Activated T-helper 2 cell treated with anti-CD3 and anti-CD28 coated beads, Interferon-gamma antibody, Interleukin-2, Interleukin-4, amounts not matched to agents 10 μg/mL and 5 μg/mL and 100 μg/mL, durations not matched to agents 14 hours and 24 hours and 36 hours (primary cell): ENCODE measurements at regions of chr12 and their contacts with region 1.

Region 1: DNA sequence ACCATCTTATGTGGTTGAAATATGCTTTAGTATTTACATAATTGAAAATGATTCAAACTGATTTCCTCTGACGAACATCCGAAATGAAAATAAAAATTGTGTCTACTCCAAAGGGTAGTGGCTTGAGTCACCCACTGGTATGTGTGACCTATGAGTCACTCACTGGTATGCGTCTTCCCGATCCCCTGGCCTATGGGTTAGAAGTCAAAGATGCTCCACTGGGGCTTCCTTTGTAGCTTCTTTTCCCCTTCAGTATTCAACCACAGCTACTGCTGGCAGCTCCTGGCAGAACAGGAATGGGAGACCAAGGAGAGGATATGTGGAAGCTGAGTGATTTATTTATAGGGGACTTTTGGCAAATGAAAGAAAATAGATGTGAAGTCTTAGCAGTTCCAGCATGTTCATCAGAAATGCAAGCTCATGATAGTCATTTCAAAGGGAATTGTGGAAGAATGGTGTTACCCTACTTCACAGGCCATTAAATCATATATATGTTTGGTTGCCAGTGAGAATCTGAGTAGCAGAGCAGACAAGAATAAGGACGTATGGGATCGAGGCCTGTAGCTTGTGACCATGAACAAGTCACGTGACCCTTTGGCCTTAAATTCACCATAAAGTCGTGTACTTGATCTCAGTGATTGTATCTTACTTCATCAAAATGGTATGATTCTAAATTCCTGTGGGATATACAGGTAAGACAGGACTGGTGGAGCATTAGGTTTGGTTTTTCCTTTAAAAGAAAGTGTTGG is 108.3 kb downstream of the CRADD start:
- DNase-seq: peak; percentile 37
- H3K4me3 Mint-ChIP-seq: peak overlapping the region; percentile 50
- H3K27ac Mint-ChIP-seq: peak overlapping the region; percentile 92
- H3K4me1 Mint-ChIP-seq: peaks cover 55% of the 10 kb centered on the region
- H3K27me3 Mint-ChIP-seq: no peaks in the 10 kb centered on the region

Region 2: DNA sequence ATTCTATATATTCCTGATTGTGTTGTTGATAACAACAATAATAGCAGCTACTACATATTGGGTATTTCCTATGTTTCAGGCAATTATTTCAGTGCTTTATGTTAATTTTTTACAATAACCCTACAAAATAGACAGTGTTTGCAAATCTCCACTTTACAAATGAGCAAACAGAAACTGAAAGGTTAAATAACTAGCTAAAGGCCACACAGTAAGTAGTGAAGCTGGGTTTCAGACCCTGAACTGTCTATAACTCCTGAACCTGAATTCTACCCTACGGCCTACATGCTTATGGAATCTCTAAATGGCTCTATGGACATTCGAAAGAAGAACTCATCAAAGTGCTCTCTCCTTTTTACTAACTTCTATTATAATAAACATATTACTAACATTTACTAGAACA is 427.4 kb before region 1 on chr12:
- intact Hi-C with region 1: no loop called
- DNase-seq: no peak
- H3K4me3 Mint-ChIP-seq: no peak overlapping the region
- H3K27ac Mint-ChIP-seq: no peak overlapping the region
- H3K4me1 Mint-ChIP-seq: peaks cover 3% of the 10 kb centered on the region
- H3K27me3 Mint-ChIP-seq: no peaks in the 10 kb centered on the region

Region 3: GRCh38 chr12:93434256-93434865 is 351.1 kb before region 1 on chr12:
- intact Hi-C with region 1: loop called (anchors 10 kb)
- DNase-seq: no peak
- H3K4me3 Mint-ChIP-seq: no peak overlapping the region
- H3K27ac Mint-ChIP-seq: no peak overlapping the region
- H3K4me1 Mint-ChIP-seq: peaks cover 46% of the 10 kb centered on the region
- H3K27me3 Mint-ChIP-seq: no peaks in the 10 kb centered on the region

Region 4: DNA sequence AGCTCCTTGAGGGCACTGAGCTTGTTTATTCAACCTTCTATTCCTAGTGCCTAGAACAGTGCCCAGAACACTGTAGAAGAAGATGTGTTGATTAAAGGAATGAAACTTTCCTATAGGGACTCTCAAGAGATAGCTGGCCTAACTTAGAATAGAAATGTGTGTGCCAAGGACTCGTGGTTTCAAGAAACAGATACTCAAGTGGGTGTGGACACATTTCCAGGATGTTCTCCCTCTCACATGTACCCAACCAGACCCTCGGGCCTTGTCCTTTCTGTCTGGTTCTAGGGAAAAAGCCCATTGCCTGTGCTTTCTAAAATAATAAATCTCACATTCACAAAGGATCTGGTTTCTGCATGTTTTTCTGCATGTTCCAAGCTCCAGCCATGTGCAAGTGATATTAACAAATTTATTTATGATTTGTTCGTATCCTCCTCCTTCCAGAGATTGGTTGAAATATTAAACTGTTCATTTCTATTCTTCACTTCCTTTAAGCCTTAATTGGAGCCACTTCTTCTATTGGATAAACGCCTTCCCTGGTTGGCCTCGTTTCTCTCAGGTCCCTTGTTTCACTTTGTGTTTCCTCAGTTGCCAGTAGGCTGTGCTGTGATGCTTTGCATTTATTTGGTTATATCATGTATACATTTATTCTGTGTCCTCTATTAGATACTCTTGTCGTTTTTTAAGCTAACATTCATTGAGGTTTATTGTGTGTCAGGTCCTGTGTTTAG is 18.5 kb before region 1 on chr12:
- intact Hi-C with region 1: loop called (anchors 2 kb)
- DNase-seq: peak; percentile 28
- H3K4me3 Mint-ChIP-seq: no peak overlapping the region
- H3K27ac Mint-ChIP-seq: no peak overlapping the region
- H3K4me1 Mint-ChIP-seq: peaks cover 32% of the 10 kb centered on the region
- H3K27me3 Mint-ChIP-seq: peaks cover 7% of the 10 kb centered on the region

Region 5: GRCh38 chr12:93879476-93880421 is 94.3 kb after region 1 on chr12:
- intact Hi-C with region 1: loop called (anchors 1 kb)
- DNase-seq: no peak
- H3K4me3 Mint-ChIP-seq: no peak overlapping the region
- H3K27ac Mint-ChIP-seq: peak overlapping the region; percentile 78
- H3K4me1 Mint-ChIP-seq: peaks cover 24% of the 10 kb centered on the region
- H3K27me3 Mint-ChIP-seq: peaks cover 4% of the 10 kb centered on the region

Region 6: DNA sequence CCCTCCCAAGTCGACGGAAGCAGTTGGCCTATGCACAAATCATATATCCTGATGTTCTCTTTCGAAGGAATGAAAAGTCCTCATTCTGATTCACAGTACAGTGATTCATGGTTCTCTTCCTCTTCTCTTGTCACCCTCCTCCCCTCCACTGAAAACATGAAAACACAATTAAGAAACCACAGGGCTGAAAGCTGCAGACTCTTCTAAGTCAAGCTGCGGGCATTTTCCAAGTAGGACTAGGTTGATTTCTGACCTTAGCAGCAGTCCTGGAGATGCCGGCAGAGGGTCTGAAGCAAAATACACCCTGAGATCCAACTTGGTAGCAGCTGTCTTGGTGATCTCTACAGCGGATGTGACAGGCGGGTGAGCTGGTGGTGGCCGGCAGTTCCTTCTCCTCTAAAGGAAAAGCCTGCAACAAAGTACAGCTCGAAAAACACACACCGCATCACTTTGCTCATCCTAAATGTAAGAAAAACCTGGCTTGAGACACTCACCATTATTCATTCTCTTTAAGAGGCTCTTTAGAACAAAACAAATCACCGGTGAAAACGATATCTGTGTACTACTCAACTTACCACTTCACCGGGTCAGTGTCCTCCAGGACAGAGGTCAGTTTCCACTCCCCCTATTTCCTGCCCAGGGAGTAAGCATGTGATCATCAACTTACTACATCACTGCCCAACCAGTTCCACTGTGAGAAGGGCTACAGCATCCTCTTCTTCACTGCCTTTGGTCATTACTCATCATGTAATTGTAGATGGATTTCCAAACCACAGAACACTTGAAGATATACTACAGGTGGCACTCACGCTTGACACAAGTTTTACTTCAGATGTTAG is 858.9 kb after region 1 on chr12:
- intact Hi-C with region 1: loop called (anchors 1 kb)
- DNase-seq: no peak
- H3K4me3 Mint-ChIP-seq: no peak overlapping the region
- H3K27ac Mint-ChIP-seq: no peak overlapping the region
- H3K4me1 Mint-ChIP-seq: peaks cover 44% of the 10 kb centered on the region
- H3K27me3 Mint-ChIP-seq: peaks cover 74% of the 10 kb centered on the region